ENCODE measurements at regions of chr9 and their contacts with region 1.

Region 1: GRCh38 chr9:21656776-21657674 is 145.4 kb upstream of the MTAP start:
- DNase-seq: peak; percentile 87
- ATAC-seq: peak; percentile 77
- H3K4me3 ChIP-seq: peak overlapping the region; percentile 2; the same call in 1 of the 2 replicates
- H3K27ac ChIP-seq: peak overlapping the region; percentile 65; the same call in 1 of the 2 replicates
- H3K4me1 ChIP-seq: peaks cover 8% of the 10 kb centered on the region
- H3K27me3 ChIP-seq: no peaks in the 10 kb centered on the region
- CTCF ChIP-seq: no peak
- POLR2A ChIP-seq: no peak
- RAD21 ChIP-seq: no peak

Region 2: DNA sequence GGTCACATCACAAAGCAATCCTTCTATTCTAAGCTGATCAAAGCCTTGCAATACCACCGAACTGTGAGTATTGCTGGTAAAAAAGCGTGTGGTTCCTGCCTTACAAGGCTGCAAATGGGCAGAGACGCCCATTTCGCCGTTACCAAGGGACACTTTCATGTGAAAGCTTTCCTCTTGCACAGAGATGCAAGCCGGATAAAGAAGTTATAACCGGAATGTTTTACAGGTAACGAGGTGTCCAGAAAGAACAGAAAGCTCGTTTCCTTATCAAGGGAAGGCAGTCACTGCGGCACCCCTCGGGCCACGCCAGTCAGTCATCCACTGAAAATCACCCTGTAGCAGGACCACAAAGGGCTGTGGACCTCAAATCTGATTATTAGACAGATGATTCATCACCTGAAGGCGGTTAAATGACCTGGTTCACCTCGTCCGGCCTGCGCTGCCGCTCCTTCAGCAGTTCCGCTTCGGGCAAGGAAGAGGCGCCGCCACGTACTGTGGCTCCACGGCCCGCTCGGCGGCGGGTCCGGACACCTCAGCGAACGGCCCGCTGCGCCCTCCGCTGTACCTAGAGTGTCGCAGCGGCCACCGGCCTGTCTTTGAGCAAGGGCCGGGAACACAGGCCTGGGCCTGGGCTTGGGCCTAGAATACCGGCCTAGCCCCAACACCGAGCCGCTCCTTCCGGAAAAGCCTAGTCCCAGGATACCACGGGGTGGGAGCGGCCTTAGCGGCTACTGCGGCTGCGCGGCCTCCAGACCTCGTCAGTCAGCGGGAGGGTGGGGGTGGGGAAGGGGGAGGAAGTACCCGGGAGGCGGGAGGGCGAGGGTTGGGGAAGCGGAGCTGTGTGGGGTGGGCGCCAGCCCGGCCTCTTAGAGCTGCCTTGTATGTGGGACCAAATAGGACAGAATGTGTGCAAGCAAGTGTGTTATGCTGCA is 322.1 kb before region 1 on chr9 and contains the start of gene KLHL9:
- CTCF ChIA-PET with region 1: no interaction called
- POLR2A ChIA-PET with region 1: no interaction called
- dilution Hi-C with region 1: no loop called
- in situ Hi-C with region 1: loop called (anchors 25 kb)
- intact Hi-C with region 1: no loop called
- DNase-seq: peak; percentile 88
- ATAC-seq: peak; percentile 98
- H3K4me3 ChIP-seq: peak within 1 kb of the TSS; percentile 94
- H3K27ac ChIP-seq: peak within 1 kb of the TSS; percentile 96
- H3K4me1 ChIP-seq: peaks cover 7% of the 10 kb centered on the region
- H3K27me3 ChIP-seq: peaks cover 4% of the 10 kb centered on the region; the same call in 1 of the 2 replicates
- CTCF ChIP-seq: no peak
- POLR2A ChIP-seq: peak; percentile 79; the same call in 1 of the 2 replicates
- RAD21 ChIP-seq: no peak
- total RNA-seq, gene KLHL9: 46.4 and 68.6 TPM in 2 replicates

Region 3: GRCh38 chr9:21591221-21592062 is 65.6 kb before region 1 on chr9:
- CTCF ChIA-PET with region 1: no interaction called
- POLR2A ChIA-PET with region 1: no interaction called
- dilution Hi-C with region 1: no loop called
- in situ Hi-C with region 1: loop called (anchors 10 kb)
- intact Hi-C with region 1: no loop called
- DNase-seq: peak; percentile 99
- ATAC-seq: peak; percentile 97
- H3K4me3 ChIP-seq: no peak overlapping the region
- H3K27ac ChIP-seq: peak overlapping the region; percentile 77
- H3K4me1 ChIP-seq: peaks cover 2% of the 10 kb centered on the region; the same call in 1 of the 2 replicates
- H3K27me3 ChIP-seq: no peaks in the 10 kb centered on the region
- CTCF ChIP-seq: no peak
- POLR2A ChIP-seq: peak; percentile 77; the same call in 1 of the 2 replicates
- RAD21 ChIP-seq: no peak; the same call in 1 of the 2 replicates

Region 4: GRCh38 chr9:21616082-21616778 is 40.8 kb before region 1 on chr9:
- CTCF ChIA-PET with region 1: no interaction called
- POLR2A ChIA-PET with region 1: no interaction called
- dilution Hi-C with region 1: no loop called
- in situ Hi-C with region 1: no loop called
- intact Hi-C with region 1: loop called (anchors 2 kb)
- DNase-seq: peak; percentile 98
- ATAC-seq: peak; percentile 93
- H3K4me3 ChIP-seq: no peak overlapping the region
- H3K27ac ChIP-seq: peak overlapping the region; percentile 12
- H3K4me1 ChIP-seq: peaks cover 11% of the 10 kb centered on the region
- H3K27me3 ChIP-seq: no peaks in the 10 kb centered on the region
- CTCF ChIP-seq: no peak
- POLR2A ChIP-seq: no peak
- RAD21 ChIP-seq: no peak

Region 5: DNA sequence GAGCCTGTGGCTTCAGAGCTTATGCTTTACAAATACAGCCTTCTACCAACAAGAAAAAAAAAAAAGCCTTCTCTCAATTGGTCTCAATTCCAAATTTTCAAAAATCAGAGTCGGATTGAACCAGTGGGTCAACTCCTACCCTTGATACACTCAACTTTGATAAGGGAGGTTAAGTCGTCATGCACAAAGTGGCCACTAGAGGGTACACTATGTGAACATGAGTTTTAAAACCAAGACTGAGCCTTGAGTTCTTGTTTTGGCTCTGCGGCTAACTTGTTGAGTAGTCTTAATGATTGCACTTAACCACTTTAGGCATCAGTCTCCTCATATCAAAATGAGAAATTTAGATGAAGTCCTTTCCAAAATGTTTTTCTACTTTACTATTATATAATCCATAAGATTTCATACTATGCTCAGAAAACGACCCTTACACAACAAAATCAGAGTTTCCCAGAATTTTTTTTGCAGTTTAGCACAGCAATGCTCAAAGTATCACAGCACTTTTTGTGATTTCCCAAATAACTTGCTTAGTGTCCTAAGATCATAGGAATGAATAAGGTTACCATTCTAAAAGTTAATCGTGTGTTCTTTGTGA is 52.5 kb after region 1 on chr9:
- CTCF ChIA-PET with region 1: no interaction called
- POLR2A ChIA-PET with region 1: no interaction called
- dilution Hi-C with region 1: no loop called
- in situ Hi-C with region 1: no loop called
- intact Hi-C with region 1: no loop called
- DNase-seq: peak; percentile 53
- ATAC-seq: peak; percentile 69
- H3K4me3 ChIP-seq: no peak overlapping the region
- H3K27ac ChIP-seq: no peak overlapping the region
- H3K4me1 ChIP-seq: peaks cover 6% of the 10 kb centered on the region; the same call in 1 of the 2 replicates
- H3K27me3 ChIP-seq: no peaks in the 10 kb centered on the region
- CTCF ChIP-seq: peak; percentile 67
- POLR2A ChIP-seq: no peak
- RAD21 ChIP-seq: peak; percentile 56

Region 6: DNA sequence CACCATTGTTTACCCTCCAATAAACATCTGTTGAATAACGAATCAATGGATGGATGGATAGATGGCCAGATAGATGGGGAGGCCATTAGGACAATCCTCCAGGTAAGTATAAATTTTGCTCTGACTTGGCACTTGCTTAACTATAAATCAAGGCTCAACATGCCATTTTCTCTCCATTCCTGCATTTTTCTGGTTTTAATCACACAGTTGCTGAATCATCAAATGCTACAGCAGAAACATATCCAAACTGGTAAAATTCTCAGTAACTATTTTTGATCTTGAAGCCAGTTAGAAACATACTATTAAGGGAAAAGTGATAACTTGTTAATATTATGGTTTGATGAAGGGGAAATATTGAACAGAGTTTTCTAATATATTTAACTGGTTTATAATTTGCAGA is 73.9 kb after region 1 on chr9:
- CTCF ChIA-PET with region 1: no interaction called
- POLR2A ChIA-PET with region 1: no interaction called
- dilution Hi-C with region 1: no loop called
- in situ Hi-C with region 1: loop called (anchors 10 kb)
- intact Hi-C with region 1: no loop called
- DNase-seq: no peak
- ATAC-seq: no peak
- H3K4me3 ChIP-seq: no peak overlapping the region
- H3K27ac ChIP-seq: no peak overlapping the region
- H3K4me1 ChIP-seq: no peaks in the 10 kb centered on the region; the same call in 1 of the 2 replicates
- H3K27me3 ChIP-seq: no peaks in the 10 kb centered on the region
- CTCF ChIP-seq: no peak
- POLR2A ChIP-seq: no peak
- RAD21 ChIP-seq: no peak

Region 7: DNA sequence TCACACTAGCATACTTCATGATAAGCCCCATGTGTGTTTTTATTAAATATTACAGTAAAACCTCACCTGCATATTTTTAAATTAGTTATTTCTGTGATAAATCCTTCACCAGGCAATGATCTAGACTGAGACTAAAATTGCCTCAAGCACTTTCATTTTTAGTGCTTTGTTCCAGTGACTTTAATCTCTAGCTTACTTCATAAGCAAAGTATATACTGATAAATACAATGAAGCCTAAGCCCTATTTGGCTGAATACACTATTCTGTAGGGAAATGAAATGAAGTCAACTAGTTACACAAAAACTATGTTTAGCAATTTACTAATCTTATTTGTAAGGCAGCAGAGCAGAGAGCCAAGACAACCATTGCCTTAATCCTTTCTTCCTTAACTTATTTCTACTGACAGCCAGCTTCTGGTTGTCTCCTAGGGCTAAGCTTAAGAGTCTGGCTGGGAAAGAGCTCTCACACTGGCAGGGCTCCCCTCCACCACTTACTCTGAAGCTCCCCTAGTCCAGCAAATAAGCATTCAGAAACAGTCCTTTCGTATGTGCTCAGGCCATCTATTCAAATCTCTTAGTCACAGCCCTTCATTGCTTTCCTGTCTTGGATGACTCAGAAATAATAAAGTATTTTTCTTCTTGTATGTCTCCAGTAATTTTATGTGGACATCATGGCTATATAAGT is 114.0 kb after region 1 on chr9:
- CTCF ChIA-PET with region 1: no interaction called
- POLR2A ChIA-PET with region 1: no interaction called
- dilution Hi-C with region 1: no loop called
- in situ Hi-C with region 1: no loop called
- intact Hi-C with region 1: no loop called
- DNase-seq: peak; percentile 88
- ATAC-seq: peak; percentile 93
- H3K4me3 ChIP-seq: peak overlapping the region; percentile 11; the same call in 1 of the 2 replicates
- H3K27ac ChIP-seq: peak overlapping the region; percentile 38; the same call in 1 of the 2 replicates
- H3K4me1 ChIP-seq: peaks cover 10% of the 10 kb centered on the region
- H3K27me3 ChIP-seq: no peaks in the 10 kb centered on the region
- CTCF ChIP-seq: no peak
- POLR2A ChIP-seq: no peak
- RAD21 ChIP-seq: no peak

Measured in IMR-90 (cell line).